ENCODE measurements at regions of chr22 and their contacts with region 1.

Region 1: GRCh38 chr22:25334162-25334490 is 114.7 kb downstream of the CRYBB2 start:
- DNase-seq: peak; percentile 41 to 62
- ATAC-seq: peak; percentile 60 to 75 (median 67)
- H3K4me3 ChIP-seq: no peak overlapping the region
- H3K27ac ChIP-seq: no peak overlapping the region
- H3K4me1 ChIP-seq: no peaks in the 10 kb centered on the region
- H3K27me3 ChIP-seq: no peaks in the 10 kb centered on the region
- CTCF ChIP-seq: peak; percentile 42

Region 2: GRCh38 chr22:25069758-25070481 is 264.2 kb before region 1 on chr22:
- intact Hi-C with region 1: loop called in 1 of 2 experiments (anchors 10 kb)
- DNase-seq: peak; percentile 58 to 76
- ATAC-seq: peak; percentile 59 to 88 (median 84)
- H3K4me3 ChIP-seq: peak overlapping the region; percentile 15
- H3K27ac ChIP-seq: no peak overlapping the region
- H3K4me1 ChIP-seq: peaks cover 5% of the 10 kb centered on the region
- H3K27me3 ChIP-seq: peaks cover 0 to 16% (median 3%) of the 10 kb centered on the region in 3 donors
- CTCF ChIP-seq: no peak